ENCODE measurements at regions of chr14 and their contacts with region 1.

Region 1: GRCh38 chr14:49633640-49634546 is 1.2 kb downstream of the DNAAF2 start:
- DNase-seq: peak; percentile 94 to 98 (median 96)
- ATAC-seq: peak; percentile 95
- H3K4me3 ChIP-seq: peak overlapping the region; percentile 76 to 98
- H3K27ac ChIP-seq: peak overlapping the region; percentile 96 to 98
- H3K4me1 ChIP-seq: peaks cover 18 to 61% of the 10 kb centered on the region in 2 donors
- H3K27me3 ChIP-seq: no peaks in the 10 kb centered on the region
- CTCF ChIP-seq: peak; percentile 68 to 70

Region 2: DNA sequence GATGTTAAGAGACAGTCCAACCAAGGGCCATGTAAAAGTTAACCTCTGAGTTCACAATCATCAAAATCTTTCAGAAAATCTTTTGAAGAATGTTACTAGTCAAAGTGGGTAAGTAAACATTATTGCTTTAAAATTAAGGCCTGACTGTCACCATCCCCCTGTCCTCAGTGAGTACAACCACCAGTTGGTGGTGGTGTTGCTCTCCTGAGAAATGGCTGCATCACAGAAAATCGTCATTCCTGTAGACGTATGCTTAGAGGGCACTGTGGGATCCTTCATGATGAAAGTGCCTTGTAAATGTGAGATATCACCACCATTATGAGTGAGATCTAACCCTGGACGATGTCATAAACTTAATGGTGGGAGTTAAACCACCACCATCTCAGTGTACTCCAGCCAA is 499.0 kb before region 1 on chr14:
- intact Hi-C with region 1: no loop called
- DNase-seq: peak in 2 of 4 donors; percentile 25 to 58
- ATAC-seq: no peak
- H3K4me3 ChIP-seq: no peak overlapping the region
- H3K27ac ChIP-seq: no peak overlapping the region
- H3K4me1 ChIP-seq: no peaks in the 10 kb centered on the region
- H3K27me3 ChIP-seq: no peaks in the 10 kb centered on the region
- CTCF ChIP-seq: no peak

Region 3: DNA sequence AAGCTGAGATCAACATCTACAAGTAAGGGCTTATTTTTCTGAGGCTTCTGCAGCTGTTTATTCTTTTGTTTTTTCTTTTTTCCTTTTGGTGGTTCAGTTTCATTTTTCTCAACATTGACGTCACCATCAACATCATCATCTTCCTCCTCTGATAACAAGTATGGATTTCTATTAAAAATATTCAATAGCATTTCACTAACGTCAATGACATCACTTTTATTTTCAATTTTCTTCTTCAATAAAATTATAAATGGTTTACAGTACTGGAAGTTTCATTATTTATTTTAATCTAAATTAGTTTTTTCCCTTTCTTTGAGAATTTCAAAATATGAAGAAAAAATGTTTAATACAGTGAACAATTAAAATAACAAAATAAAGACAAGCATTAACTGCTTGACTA is 194.7 kb after region 1 on chr14:
- intact Hi-C with region 1: loop called in 1 of 2 experiments (anchors 10 kb)
- DNase-seq: no peak
- ATAC-seq: no peak
- H3K4me3 ChIP-seq: no peak overlapping the region
- H3K27ac ChIP-seq: no peak overlapping the region
- H3K4me1 ChIP-seq: no peaks in the 10 kb centered on the region
- H3K27me3 ChIP-seq: no peaks in the 10 kb centered on the region
- CTCF ChIP-seq: no peak